Transverse colon (tissue), 4 donors: ENCODE measurements at regions of chr2 and their contacts with region 1.

Region 1: DNA sequence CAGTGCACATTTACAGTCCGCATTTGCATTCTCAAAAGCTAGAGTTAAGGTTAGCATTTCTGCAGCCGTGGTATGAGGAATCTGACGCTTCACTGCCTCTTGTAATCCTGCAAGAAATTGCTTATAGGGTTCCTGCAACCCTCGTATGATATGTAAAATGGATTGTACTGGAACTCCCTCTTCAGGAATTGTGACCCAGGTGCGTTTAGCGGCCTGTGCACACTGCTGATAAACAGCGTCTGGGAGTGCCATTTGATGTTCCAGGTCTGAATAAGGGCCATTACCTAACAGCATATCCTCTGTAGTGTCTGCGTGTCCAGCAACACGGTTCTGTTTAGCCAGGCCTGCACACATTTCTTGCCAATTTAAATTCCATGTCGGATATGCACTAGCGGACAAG is 42.5 kb downstream of the CXCR4 start:
- DNase-seq: no peak
- H3K4me3 ChIP-seq: no peak overlapping the region
- H3K27ac ChIP-seq: no peak overlapping the region
- H3K4me1 ChIP-seq: no peaks in the 10 kb centered on the region
- H3K27me3 ChIP-seq: no peaks in the 10 kb centered on the region
- CTCF ChIP-seq: no peak
- EP300 ChIP-seq: no peak
- POLR2A ChIP-seq: no peak

Region 2: GRCh38 chr2:136225950-136226835 is 150.7 kb after region 1 on chr2:
- in situ Hi-C with region 1: no loop called
- intact Hi-C with region 1: loop called (anchors 10 kb)
- DNase-seq: peak; percentile 54
- H3K4me3 ChIP-seq: no peak overlapping the region
- H3K27ac ChIP-seq: no peak overlapping the region
- H3K4me1 ChIP-seq: peaks cover 0 to 8% (median 0%) of the 10 kb centered on the region in 4 donors
- H3K27me3 ChIP-seq: no peaks in the 10 kb centered on the region
- CTCF ChIP-seq: no peak
- EP300 ChIP-seq: peak; percentile 46
- POLR2A ChIP-seq: peak; percentile 27